ENCODE measurements at regions of chr20 and their contacts with region 1.

Region 1: GRCh38 chr20:33666293-33667244 is at the start of gene ACTL10:
- DNase-seq: no peak
- ATAC-seq: no peak
- H3K4me3 ChIP-seq: no peak within 1 kb of the TSS
- H3K27ac ChIP-seq: no peak within 1 kb of the TSS
- H3K4me1 ChIP-seq: peaks cover 48% of the 10 kb centered on the region
- H3K27me3 ChIP-seq: no peaks in the 10 kb centered on the region; a peak in 1 of 5 replicates
- CTCF ChIP-seq: no peak
- EP300 ChIP-seq: no peak
- POLR2A ChIP-seq: no peak
- RAD21 ChIP-seq: no peak
- total RNA-seq, gene ACTL10: not detected in 2 replicates

Region 2: DNA sequence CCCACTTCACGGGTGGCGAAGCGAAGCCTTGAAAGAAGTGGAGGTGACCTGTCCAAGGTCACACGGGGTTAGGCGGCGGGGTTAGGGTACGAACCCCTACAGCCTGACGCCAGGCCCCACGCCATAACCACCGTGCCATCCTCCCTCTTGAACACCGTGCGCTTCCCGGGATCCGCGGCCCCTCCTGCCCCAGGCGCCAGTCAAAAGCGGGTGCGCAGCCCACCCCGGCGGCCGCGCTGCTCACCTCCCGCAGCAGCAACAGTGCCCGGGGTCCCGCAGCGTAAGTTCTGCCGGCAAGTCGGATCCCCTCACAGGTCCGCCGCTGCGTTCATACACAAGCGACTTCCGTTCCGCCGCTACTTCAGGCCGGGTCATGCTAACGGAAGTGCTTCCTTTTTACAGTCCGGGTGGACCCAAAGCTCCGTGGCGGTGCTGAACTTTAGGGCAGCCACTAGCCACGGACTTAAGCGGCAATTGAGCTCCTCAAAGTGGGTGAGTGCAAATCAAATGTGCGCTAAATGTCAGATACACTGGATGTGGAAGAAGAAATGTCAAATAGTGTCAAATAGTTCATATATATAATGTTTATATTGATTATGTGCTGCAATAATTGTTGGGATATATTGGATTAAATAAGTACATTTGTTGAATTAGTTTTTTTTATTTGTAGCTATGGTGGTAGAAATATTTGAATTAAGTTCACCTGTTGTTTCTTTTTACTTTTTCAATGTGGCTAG is 265.2 kb before region 1 on chr20 and contains the start of gene CDK5RAP1:
- CTCF ChIA-PET with region 1: no interaction called
- POLR2A ChIA-PET with region 1: interaction called, 3 read pairs
- in situ Hi-C with region 1: no loop called
- intact Hi-C with region 1: loop called (anchors 5 kb)
- DNase-seq: peak; percentile 93
- ATAC-seq: peak; percentile 93
- H3K4me3 ChIP-seq: peak within 1 kb of the TSS; percentile 84 to 96 (median 85)
- H3K27ac ChIP-seq: peak within 1 kb of the TSS; percentile 59
- H3K4me1 ChIP-seq: peaks cover 26% of the 10 kb centered on the region
- H3K27me3 ChIP-seq: peaks cover 0 to 3% of the 10 kb centered on the region in 2 experiments; a peak in 1 of 5 replicates
- CTCF ChIP-seq: no peak; the same call in none of the 2 replicates
- EP300 ChIP-seq: peak; percentile 56 to 75; a peak in 3 of 4 replicates
- POLR2A ChIP-seq: peak; percentile 91 to 97
- RAD21 ChIP-seq: peak; percentile 70; the same call in 1 of the 2 replicates
- total RNA-seq, gene CDK5RAP1: 98.2 and 104 TPM in 2 replicates

Region 3: GRCh38 chr20:33443512-33444239 is 222.9 kb before region 1 on chr20 and contains the start of gene SNTA1:
- CTCF ChIA-PET with region 1: no interaction called
- POLR2A ChIA-PET with region 1: interaction called, 13 read pairs
- in situ Hi-C with region 1: no loop called
- intact Hi-C with region 1: no loop called
- DNase-seq: peak; percentile 92
- ATAC-seq: peak; percentile 85
- H3K4me3 ChIP-seq: peak within 1 kb of the TSS; percentile 64 to 95 (median 72)
- H3K27ac ChIP-seq: peak within 1 kb of the TSS; percentile 45
- H3K4me1 ChIP-seq: peaks cover 54% of the 10 kb centered on the region
- H3K27me3 ChIP-seq: peaks cover 0 to 10% of the 10 kb centered on the region in 2 experiments; a peak in 2 of 5 replicates
- CTCF ChIP-seq: no peak
- EP300 ChIP-seq: 0 out of 4 replicates have a peak, but pooled peaks of 1 of the 2 experiments have one; percentile 7
- POLR2A ChIP-seq: no peak; a peak in 1 of 4 replicates
- RAD21 ChIP-seq: peak; percentile 84
- total RNA-seq, gene SNTA1: 14.8 and 16.4 TPM in 2 replicates

Region 4: GRCh38 chr20:33539129-33539528 is 127.4 kb before region 1 on chr20:
- CTCF ChIA-PET with region 1: no interaction called
- POLR2A ChIA-PET with region 1: no interaction called
- in situ Hi-C with region 1: no loop called
- intact Hi-C with region 1: no loop called
- DNase-seq: peak; percentile 58
- ATAC-seq: peak; percentile 77
- H3K4me3 ChIP-seq: no peak overlapping the region
- H3K27ac ChIP-seq: peak overlapping the region; percentile 19
- H3K4me1 ChIP-seq: peaks cover 55% of the 10 kb centered on the region
- H3K27me3 ChIP-seq: no peaks in the 10 kb centered on the region
- CTCF ChIP-seq: no peak
- EP300 ChIP-seq: no peak
- POLR2A ChIP-seq: no peak
- RAD21 ChIP-seq: no peak

Region 5: DNA sequence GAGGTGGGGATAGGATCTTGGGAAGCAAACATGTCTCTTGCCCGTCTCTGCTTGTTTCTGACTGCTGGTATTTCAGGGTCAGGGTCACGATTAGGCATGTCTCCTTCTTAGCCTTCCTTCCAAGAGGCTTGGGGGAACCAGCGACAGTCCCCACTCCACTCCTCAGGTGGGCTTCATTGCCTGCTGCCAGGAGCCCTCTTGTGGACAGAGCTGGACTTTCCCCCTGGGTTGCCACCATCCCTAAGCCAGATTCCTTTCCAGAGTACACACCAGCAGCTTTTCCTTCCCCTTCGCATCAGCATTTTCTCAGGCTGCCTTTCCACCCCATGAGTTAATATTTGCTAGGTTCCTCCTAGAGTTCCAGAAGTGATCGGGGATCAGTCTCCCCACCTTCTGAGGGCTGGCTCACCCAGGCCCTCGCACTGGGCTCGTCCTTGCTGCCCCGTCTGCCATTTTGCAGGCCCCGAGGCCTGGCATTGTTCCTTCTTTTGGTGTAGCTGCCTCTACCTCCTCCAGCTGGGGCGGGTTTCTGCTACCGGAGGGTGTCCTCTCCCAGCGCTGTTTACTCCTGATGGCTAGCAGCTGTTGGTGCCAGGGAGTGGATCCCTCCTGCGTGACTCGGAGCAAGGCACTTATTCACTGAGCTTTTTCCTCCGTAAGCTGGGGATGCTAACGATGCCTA is 13.2 kb before region 1 on chr20:
- CTCF ChIA-PET with region 1: no interaction called
- POLR2A ChIA-PET with region 1: interaction called, 24 read pairs
- in situ Hi-C with region 1: no loop called
- intact Hi-C with region 1: no loop called
- DNase-seq: peak; percentile 75
- ATAC-seq: peak; percentile 73
- H3K4me3 ChIP-seq: no peak overlapping the region
- H3K27ac ChIP-seq: no peak overlapping the region
- H3K4me1 ChIP-seq: peaks cover 37% of the 10 kb centered on the region
- H3K27me3 ChIP-seq: no peaks in the 10 kb centered on the region
- CTCF ChIP-seq: peak; percentile 99
- EP300 ChIP-seq: no peak
- POLR2A ChIP-seq: peak in 1 of 2 experiments; percentile 66; a peak in 2 of 4 replicates
- RAD21 ChIP-seq: peak; percentile 96

Region 6: GRCh38 chr20:33686100-33686983 is 19.8 kb after region 1 on chr20 and contains the start of gene E2F1:
- CTCF ChIA-PET with region 1: no interaction called
- POLR2A ChIA-PET with region 1: interaction called, 17 read pairs
- in situ Hi-C with region 1: no loop called
- intact Hi-C with region 1: no loop called
- DNase-seq: peak; percentile 94
- ATAC-seq: peak; percentile 91
- H3K4me3 ChIP-seq: peak within 1 kb of the TSS; percentile 58 to 82 (median 65)
- H3K27ac ChIP-seq: peak within 1 kb of the TSS; percentile 56
- H3K4me1 ChIP-seq: peaks cover 63% of the 10 kb centered on the region
- H3K27me3 ChIP-seq: no peaks in the 10 kb centered on the region
- CTCF ChIP-seq: peak; percentile 82
- EP300 ChIP-seq: no peak
- POLR2A ChIP-seq: peak; percentile 42 to 51; a peak in 1 of 4 replicates
- RAD21 ChIP-seq: peak; percentile 5
- total RNA-seq, gene E2F1: 25.3 and 39.4 TPM in 2 replicates

Region 7: GRCh38 chr20:33731693-33732165 is 65.2 kb after region 1 on chr20 and contains the start of gene ZNF341:
- CTCF ChIA-PET with region 1: interaction called, 5 read pairs
- POLR2A ChIA-PET with region 1: interaction called, 15 read pairs
- in situ Hi-C with region 1: no loop called
- intact Hi-C with region 1: loop called (anchors 5 kb)
- DNase-seq: peak; percentile 90
- ATAC-seq: peak; percentile 76
- H3K4me3 ChIP-seq: peak within 1 kb of the TSS; percentile 60 to 81 (median 65)
- H3K27ac ChIP-seq: peak within 1 kb of the TSS; percentile 84
- H3K4me1 ChIP-seq: peaks cover 34% of the 10 kb centered on the region
- H3K27me3 ChIP-seq: no peaks in the 10 kb centered on the region
- CTCF ChIP-seq: peak; percentile 96
- EP300 ChIP-seq: peak in 1 of 2 experiments; percentile 80; a peak in 2 of 4 replicates
- POLR2A ChIP-seq: no peak
- RAD21 ChIP-seq: peak; percentile 99
- total RNA-seq, gene ZNF341: 0.97 and 1.1 TPM in 2 replicates